PC-9 (cell line): ENCODE measurements at regions of chr6 and their contacts with region 1.

Region 1: DNA sequence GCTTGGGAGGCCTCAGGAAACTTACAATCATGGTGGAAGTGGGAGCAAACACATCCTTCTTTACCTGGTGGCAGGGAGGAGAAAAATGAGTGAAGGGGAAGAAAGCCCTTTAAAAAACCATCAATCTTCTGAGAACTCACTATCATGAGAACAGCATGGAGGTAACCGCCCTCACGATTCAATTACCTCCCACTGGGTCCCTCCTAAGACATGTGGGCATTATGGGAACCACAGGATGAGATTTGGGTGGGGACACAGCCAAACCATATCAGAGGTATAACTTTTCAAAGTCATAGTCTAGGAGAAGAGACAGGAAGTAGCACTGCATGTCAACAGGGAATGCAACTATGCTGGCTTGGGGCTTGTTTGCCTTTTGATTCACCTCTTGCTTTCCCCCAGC is 59.9 kb upstream of the DTNBP1 start:
- DNase-seq: no peak
- H3K4me3 ChIP-seq: no peak overlapping the region
- H3K27ac ChIP-seq: no peak overlapping the region
- H3K4me1 ChIP-seq: no peaks in the 10 kb centered on the region
- H3K27me3 ChIP-seq: peaks cover 62% of the 10 kb centered on the region
- CTCF ChIP-seq: no peak

Region 2: GRCh38 chr6:16004934-16005679 is 282.4 kb after region 1 on chr6:
- CTCF ChIA-PET with region 1: interaction called, 11 read pairs
- POLR2A ChIA-PET with region 1: no interaction called
- intact Hi-C with region 1: no loop called
- DNase-seq: no peak
- H3K4me3 ChIP-seq: no peak overlapping the region
- H3K27ac ChIP-seq: no peak overlapping the region
- H3K4me1 ChIP-seq: no peaks in the 10 kb centered on the region
- H3K27me3 ChIP-seq: peaks cover 76% of the 10 kb centered on the region
- CTCF ChIP-seq: no peak